ENCODE measurements at regions of chr19 and their contacts with region 1.

Region 1: DNA sequence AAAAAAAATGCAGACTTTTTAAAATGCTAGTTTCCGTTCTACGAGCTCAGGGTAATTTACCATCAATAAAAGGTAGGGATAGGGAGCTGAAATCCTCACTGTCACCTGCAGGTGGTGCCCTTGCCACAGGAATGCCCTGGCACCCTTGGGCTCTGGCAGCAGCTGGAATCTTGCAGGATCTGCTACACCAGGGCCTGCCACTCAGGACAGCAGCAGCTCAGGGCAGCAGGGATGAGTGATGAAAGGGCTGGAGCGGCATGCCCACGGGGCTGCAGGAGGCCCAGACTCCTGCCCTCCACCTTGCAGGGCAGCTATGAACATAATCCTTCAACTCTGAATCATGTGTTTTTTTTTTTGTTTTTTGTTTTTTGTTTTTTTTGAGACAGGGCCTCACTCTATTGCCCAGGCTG is 54.0 kb downstream of the GNG7 start:
- DNase-seq: peak; percentile 85
- CTCF ChIP-seq: peak; percentile 86

Region 2: GRCh38 chr19:2661615-2662014 is 13.1 kb after region 1 on chr19:
- CTCF ChIA-PET with region 1: interaction called, 18 read pairs
- POLR2A ChIA-PET with region 1: no interaction called
- DNase-seq: no peak
- CTCF ChIP-seq: no peak

Region 3: DNA sequence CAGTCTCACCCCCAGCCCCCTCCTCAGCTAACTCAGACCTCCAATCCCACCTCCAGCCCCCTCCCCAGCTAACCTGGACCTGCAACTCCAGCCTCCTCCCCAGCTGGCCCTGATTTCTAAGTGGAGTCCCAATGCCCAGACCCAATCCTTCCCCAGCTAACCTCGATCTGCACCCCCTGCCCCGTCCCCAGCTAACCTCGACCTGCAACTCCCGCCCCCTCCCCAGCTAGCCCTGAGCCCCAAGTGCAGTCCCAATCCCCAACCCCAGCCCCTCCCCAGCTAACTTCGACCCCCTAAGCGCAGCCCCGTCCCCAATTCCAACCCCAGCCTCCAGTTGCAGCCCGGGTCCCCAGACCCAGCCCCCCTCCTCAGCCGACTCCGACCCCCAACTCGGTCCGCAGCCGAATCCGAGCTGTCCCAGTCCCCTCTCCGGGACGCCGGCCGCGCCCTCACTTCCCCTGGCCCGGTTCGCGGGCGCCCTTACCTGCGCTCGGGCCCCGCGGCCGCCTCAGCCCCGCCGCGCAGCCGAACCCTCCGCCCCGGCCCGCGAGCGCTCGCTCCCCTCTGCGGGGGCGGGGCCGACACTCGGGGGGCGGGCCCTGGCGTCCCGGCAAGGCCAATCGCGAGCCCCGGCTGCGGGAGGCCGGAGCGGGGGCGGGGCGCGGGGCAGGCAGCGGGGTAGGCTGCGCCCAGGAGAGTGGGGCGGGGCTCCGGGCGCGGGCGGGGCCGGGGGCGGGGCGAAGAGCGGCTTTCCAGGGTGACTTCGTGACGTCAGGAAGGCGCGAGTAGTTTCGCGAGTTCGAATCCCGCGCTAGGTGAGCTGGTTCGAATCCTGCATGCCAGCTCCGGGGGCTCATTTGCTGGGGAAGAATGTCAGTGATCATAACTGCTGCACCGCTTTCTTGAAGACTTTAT is 53.9 kb after region 1 on chr19 and contains the start of gene GNG7:
- CTCF ChIA-PET with region 1: interaction called, 11 read pairs
- POLR2A ChIA-PET with region 1: no interaction called
- DNase-seq: peak; percentile 100
- CTCF ChIP-seq: no peak

Region 4: DNA sequence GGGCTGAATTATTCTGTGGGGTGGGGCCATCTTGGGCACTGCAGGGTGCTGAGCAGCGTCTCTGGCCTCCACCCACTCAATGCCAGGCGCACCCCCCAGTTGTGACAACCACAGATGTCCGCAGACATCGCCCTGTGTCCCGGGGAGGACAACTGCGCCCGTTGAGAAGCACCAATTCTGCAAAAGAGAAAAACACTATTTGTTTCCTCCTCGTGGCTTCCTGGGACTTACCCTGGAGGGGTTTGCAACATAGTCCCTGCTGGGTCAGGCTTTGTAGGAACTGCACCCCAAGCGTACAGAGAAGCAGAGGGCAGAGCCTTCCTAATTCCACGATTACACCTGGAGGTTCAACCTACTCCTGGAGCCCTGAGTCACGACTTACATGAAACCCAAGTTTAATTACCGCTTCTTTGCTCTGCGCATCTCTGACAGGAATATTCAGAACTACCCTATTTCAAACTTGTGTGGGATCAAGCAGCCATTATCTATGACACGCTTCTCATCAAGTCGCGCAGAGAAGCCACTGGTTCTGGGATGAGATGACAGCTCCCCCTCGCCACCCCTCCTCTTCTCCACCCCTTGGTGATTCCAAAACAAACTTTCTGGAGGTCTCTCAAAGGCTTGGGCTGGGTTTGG is 102.4 kb after region 1 on chr19:
- CTCF ChIA-PET with region 1: interaction called, 88 read pairs
- POLR2A ChIA-PET with region 1: interaction called, 5 read pairs
- DNase-seq: no peak
- CTCF ChIP-seq: no peak

Region 5: DNA sequence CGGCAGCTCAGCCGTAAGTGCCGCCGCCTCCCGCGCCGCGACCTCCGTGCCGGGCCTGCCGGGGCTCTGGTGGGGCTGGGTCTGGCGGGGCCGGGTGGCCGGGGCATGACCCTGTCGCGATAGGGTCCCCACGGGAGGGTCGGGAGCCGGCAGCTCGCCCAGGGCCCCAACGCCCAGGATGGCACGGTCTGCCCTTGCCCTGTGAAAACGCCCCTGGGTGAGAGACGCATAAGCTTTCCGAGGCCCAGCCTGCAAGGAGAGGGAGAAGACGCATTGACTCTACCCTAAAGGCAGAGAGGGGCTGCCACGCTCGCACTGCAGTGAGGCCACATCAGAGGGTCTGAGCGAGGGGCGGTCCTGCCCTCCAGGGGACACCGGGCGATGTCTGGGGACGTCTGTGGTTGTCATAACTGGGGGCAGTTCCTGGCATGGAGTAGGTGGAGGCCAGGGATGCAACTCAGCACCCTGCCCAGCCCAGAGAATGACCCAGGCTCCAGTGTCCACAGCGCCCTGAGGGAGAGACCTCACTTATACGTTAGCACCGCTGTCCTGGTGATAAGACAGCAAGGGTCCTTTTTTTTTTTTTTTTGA is 171.7 kb after region 1 on chr19:
- CTCF ChIA-PET with region 1: interaction called, 11 read pairs
- POLR2A ChIA-PET with region 1: no interaction called
- DNase-seq: no peak
- CTCF ChIP-seq: no peak

Measured in GM10248 (cell line).